ENCODE measurements at regions of chr1 and their contacts with region 1.

Region 1: GRCh38 chr1:204411451-204412204 is at the start of gene PPP1R15B:
- DNase-seq: peak; percentile 97
- H3K4me3 Mint-ChIP-seq: peak within 1 kb of the TSS; percentile 99
- H3K27ac Mint-ChIP-seq: peak within 1 kb of the TSS; percentile 99
- H3K4me1 Mint-ChIP-seq: peaks cover 8% of the 10 kb centered on the region
- H3K27me3 Mint-ChIP-seq: no peaks in the 10 kb centered on the region
- total RNA-seq, gene PPP1R15B: 63.7 to 65.6 TPM

Region 2: GRCh38 chr1:204323887-204324286 is 87.7 kb before region 1 on chr1:
- CTCF ChIA-PET with region 1: no interaction called
- intact Hi-C with region 1: no loop called
- DNase-seq: peak; percentile 88
- H3K4me3 Mint-ChIP-seq: no peak overlapping the region
- H3K27ac Mint-ChIP-seq: peak overlapping the region; percentile 59
- H3K4me1 Mint-ChIP-seq: peaks cover 22% of the 10 kb centered on the region
- H3K27me3 Mint-ChIP-seq: no peaks in the 10 kb centered on the region

Region 3: GRCh38 chr1:204384994-204385352 is 26.7 kb before region 1 on chr1:
- CTCF ChIA-PET with region 1: no interaction called
- intact Hi-C with region 1: loop called (anchors 1 kb)
- DNase-seq: no peak
- H3K4me3 Mint-ChIP-seq: no peak overlapping the region
- H3K27ac Mint-ChIP-seq: no peak overlapping the region
- H3K4me1 Mint-ChIP-seq: peaks cover 3% of the 10 kb centered on the region
- H3K27me3 Mint-ChIP-seq: no peaks in the 10 kb centered on the region

Region 4: GRCh38 chr1:204431310-204432165 is 19.9 kb after region 1 on chr1:
- CTCF ChIA-PET with region 1: interaction called, 31 read pairs
- intact Hi-C with region 1: loop called (anchors 2 kb)
- DNase-seq: peak; percentile 89
- H3K4me3 Mint-ChIP-seq: no peak overlapping the region
- H3K27ac Mint-ChIP-seq: no peak overlapping the region
- H3K4me1 Mint-ChIP-seq: peaks cover 8% of the 10 kb centered on the region
- H3K27me3 Mint-ChIP-seq: no peaks in the 10 kb centered on the region

Region 5: GRCh38 chr1:204453141-204453772 is 41.6 kb after region 1 on chr1:
- CTCF ChIA-PET with region 1: no interaction called
- intact Hi-C with region 1: loop called (anchors 1 kb)
- DNase-seq: peak; percentile 92
- H3K4me3 Mint-ChIP-seq: peak overlapping the region; percentile 60
- H3K27ac Mint-ChIP-seq: peak overlapping the region; percentile 94
- H3K4me1 Mint-ChIP-seq: peaks cover 37% of the 10 kb centered on the region
- H3K27me3 Mint-ChIP-seq: no peaks in the 10 kb centered on the region

Region 6: DNA sequence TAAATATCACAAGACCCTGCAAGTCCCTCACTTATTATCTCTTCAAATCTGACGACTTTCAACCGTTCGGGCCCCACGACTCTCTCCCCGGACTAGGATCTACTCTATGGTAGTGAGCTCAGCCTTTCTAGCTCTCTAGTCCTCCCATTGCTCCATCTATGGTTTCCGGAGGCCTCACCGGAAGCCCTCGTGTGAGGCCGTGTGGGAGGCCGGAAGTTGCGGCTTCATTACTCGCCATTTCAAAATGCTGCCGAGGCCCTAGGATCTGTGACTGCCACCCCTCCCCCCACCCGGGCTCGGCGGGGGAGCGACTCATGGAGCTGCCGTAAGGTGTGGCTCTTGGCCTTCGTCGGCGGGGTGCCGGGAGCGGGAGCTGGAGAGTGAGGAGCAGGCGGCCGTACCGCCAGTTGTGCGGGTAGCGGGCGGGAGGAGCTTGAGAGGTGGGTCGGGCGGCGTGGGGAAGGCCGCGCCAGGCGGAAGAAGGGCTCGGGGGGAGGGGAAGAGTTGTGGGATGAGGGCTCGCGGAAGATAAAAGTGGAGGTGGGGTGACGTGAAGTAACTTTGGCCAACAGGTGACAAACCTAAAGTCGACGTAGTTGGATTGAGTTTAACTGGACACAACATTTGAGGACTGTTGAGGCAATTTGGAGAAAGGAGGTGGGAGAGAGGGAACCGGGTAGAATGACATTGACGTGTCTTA is 104.7 kb after region 1 on chr1 and contains the start of gene MDM4:
- CTCF ChIA-PET with region 1: interaction called, 8 read pairs
- intact Hi-C with region 1: loop called (anchors 1 kb)
- DNase-seq: peak; percentile 97
- H3K4me3 Mint-ChIP-seq: no peak within 1 kb of the TSS
- H3K27ac Mint-ChIP-seq: peak within 1 kb of the TSS; percentile 72
- H3K4me1 Mint-ChIP-seq: peaks cover 59% of the 10 kb centered on the region
- H3K27me3 Mint-ChIP-seq: no peaks in the 10 kb centered on the region
- total RNA-seq, gene MDM4: 109 TPM

Measured in activated naive CD4-positive, alpha-beta T cell treated with anti-CD3 and anti-CD28 coated beads for 36 hours (primary cell).